MCF 10A (cell line): ENCODE measurements at regions of chr2 and their contacts with region 1.

Region 1: GRCh38 chr2:1556751-1557466 is 143.6 kb downstream of the TPO start:
- DNase-seq: peak; percentile 65
- H3K4me3 Mint-ChIP-seq: no peak overlapping the region
- H3K27ac Mint-ChIP-seq: no peak overlapping the region
- H3K4me1 Mint-ChIP-seq: peaks cover 6% of the 10 kb centered on the region
- H3K27me3 Mint-ChIP-seq: peaks cover 11% of the 10 kb centered on the region
- CTCF ChIP-seq: no peak

Region 2: GRCh38 chr2:1584691-1585485 is 28.0 kb after region 1 on chr2:
- CTCF ChIA-PET with region 1: interaction called, 6 read pairs
- POLR2A ChIA-PET with region 1: no interaction called
- intact Hi-C with region 1: loop called (anchors 2 kb)
- DNase-seq: peak; percentile 34
- H3K4me3 Mint-ChIP-seq: no peak overlapping the region
- H3K27ac Mint-ChIP-seq: no peak overlapping the region
- H3K4me1 Mint-ChIP-seq: peaks cover 13% of the 10 kb centered on the region
- H3K27me3 Mint-ChIP-seq: no peaks in the 10 kb centered on the region
- CTCF ChIP-seq: peak; percentile 34